ENCODE measurements at regions of chr5 and their contacts with region 1.

Region 1: GRCh38 chr5:82952326-82952725 is 124.9 kb downstream of the TMEM167A start:
- DNase-seq: no peak
- ATAC-seq: no peak
- H3K4me3 ChIP-seq: no peak overlapping the region
- H3K27ac ChIP-seq: no peak overlapping the region
- H3K4me1 ChIP-seq: no peaks in the 10 kb centered on the region
- H3K27me3 ChIP-seq: no peaks in the 10 kb centered on the region
- CTCF ChIP-seq: no peak

Region 2: DNA sequence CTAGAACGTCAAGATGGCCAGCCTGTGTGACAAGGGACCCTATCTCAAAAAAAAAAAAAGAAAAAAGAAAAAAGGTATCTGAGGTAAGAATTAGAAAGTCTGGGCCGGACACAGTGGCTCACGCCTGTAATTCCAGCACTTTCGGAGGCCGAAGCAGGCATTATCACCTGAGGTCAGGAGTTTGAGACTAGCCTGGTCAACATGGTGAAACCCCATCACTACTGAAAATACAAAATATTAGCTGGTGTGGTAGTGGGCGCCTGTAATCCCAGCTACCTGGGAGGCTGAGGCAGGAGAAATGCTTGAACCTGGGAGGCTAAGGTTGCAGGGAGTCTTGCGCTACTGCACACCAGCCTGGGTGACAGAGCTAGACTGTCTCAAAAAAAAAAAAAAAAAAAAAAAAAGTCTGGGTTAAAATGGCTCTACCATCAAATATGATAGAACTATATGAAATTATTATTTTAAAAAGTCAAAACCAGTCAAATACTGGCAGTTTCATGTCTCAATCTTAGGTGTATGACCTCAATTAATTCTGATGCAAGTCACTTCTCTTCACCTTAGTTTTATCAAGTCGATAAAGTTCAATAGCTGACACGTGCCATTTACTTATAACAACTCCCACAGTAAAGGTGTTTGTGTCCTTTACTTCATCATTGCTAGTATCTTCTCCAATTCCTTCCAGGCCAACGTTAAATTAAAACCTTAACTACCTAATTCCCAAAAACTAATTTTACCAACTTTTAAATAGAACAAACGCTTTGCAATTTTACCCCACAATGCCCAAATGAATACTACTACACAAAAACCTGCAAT is 675.3 kb before region 1 on chr5:
- CTCF ChIA-PET with region 1: no interaction called
- POLR2A ChIA-PET with region 1: interaction called, 20 read pairs
- in situ Hi-C with region 1: no loop called
- intact Hi-C with region 1: no loop called
- DNase-seq: no peak
- ATAC-seq: no peak
- H3K4me3 ChIP-seq: peak overlapping the region; percentile 93 to 100
- H3K27ac ChIP-seq: peak overlapping the region; percentile 99
- H3K4me1 ChIP-seq: peaks cover 19% of the 10 kb centered on the region
- H3K27me3 ChIP-seq: no peaks in the 10 kb centered on the region
- CTCF ChIP-seq: no peak

Region 3: DNA sequence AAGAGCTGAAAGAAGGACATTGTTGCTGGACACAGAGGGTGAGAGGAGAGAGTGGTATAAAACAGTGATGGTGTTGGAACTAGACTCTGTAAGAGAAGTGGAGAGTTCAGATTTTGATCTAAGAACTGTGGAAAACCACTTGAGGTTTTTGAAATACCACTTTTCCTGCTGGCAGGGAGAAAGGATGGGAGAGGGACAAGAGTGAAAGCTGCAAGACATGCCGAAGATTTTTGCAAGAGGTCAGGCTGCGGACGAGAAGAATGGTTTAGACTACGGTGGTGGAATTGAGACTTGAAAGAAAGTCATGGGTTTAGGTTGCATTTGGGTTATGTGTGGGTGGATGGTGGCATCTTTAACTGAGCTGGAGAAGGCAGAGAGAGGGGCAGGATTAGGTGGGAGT is 472.0 kb before region 1 on chr5:
- CTCF ChIA-PET with region 1: no interaction called
- POLR2A ChIA-PET with region 1: no interaction called
- in situ Hi-C with region 1: no loop called
- intact Hi-C with region 1: no loop called
- DNase-seq: no peak
- ATAC-seq: no peak
- H3K4me3 ChIP-seq: no peak overlapping the region
- H3K27ac ChIP-seq: no peak overlapping the region
- H3K4me1 ChIP-seq: no peaks in the 10 kb centered on the region
- H3K27me3 ChIP-seq: peaks cover 3% of the 10 kb centered on the region; the same call in 1 of the 2 replicates
- CTCF ChIP-seq: no peak

Region 4: DNA sequence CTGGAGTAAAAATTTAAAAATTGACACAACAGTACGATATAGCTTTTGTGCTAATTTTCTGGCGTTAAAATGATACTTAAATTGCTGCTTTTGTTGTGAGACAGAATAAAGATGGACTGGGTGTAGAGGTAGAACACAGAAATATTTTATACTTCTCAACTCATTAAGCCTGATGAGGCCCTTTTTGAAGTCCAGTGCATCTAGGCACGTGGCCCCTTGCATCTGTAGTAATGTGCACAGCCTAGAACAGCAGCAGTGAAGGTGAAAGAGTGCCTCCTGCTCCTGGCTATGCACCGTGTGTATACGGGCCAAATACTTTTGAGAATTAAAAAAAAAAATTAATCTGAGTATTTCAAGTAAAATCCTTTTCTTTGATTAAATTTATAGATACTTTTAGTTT is 240.6 kb after region 1 on chr5:
- CTCF ChIA-PET with region 1: no interaction called
- POLR2A ChIA-PET with region 1: no interaction called
- in situ Hi-C with region 1: no loop called
- intact Hi-C with region 1: no loop called
- DNase-seq: no peak
- ATAC-seq: no peak
- H3K4me3 ChIP-seq: no peak overlapping the region
- H3K27ac ChIP-seq: no peak overlapping the region
- H3K4me1 ChIP-seq: no peaks in the 10 kb centered on the region
- H3K27me3 ChIP-seq: no peaks in the 10 kb centered on the region
- CTCF ChIP-seq: no peak

Region 5: DNA sequence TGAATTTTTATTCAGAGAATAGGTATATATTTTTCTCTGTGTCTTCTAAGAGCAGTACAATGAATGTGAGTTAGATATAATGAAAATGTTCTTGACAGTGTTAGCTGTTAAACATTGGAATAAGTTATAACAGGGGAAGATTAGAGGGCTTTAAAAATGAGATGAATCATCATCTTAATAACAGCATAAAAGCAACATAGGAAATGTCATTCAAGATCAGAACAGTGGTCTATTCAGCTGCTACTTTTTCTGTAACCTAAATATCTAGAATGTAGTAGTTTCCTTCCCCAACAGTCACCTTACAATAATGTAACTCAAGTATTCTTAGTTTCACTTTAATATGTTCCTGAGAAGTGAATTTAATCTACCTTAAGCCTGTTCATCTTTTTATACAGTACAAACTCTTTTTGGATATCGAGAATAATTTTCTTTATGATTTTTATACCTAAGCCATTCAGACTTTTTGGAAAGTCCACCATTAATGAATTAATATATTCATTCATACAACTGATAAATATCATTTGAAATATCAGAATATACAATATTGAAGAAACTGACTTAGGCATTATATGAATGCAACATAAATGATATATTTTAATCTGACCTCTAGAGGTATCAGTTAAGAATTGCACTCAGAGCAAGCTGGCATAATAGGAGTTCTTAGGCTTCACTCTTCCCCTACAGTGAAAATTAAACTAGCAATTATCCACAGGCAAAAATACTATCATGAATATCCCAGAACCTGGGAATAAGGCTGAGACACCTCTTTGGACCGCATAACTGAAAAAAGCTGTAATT is 1498.5 kb after region 1 on chr5:
- CTCF ChIA-PET with region 1: no interaction called
- POLR2A ChIA-PET with region 1: no interaction called
- in situ Hi-C with region 1: no loop called
- intact Hi-C with region 1: no loop called
- DNase-seq: no peak
- ATAC-seq: no peak
- H3K4me3 ChIP-seq: no peak overlapping the region
- H3K27ac ChIP-seq: no peak overlapping the region
- H3K4me1 ChIP-seq: no peaks in the 10 kb centered on the region
- H3K27me3 ChIP-seq: no peaks in the 10 kb centered on the region
- CTCF ChIP-seq: peak; percentile 52; the same call in 1 of the 2 replicates